SK-N-SH (cell line): ENCODE measurements at regions of chr22 and their contacts with region 1.

Region 1: GRCh38 chr22:42444077-42444904 is 12.1 kb upstream of the NFAM1 start:
- DNase-seq: peak; percentile 90
- H3K4me3 ChIP-seq: peak overlapping the region; percentile 34 to 52
- H3K27ac ChIP-seq: peak overlapping the region; percentile 33 to 76; a peak in 3 of 4 replicates
- H3K4me1 ChIP-seq: peaks cover 9 to 11% of the 10 kb centered on the region in 2 experiments; a peak in 2 of 4 replicates
- H3K27me3 ChIP-seq: no peaks in the 10 kb centered on the region
- CTCF ChIP-seq: peak; percentile 60
- EP300 ChIP-seq: no peak
- RAD21 ChIP-seq: peak; percentile 70

Region 2: GRCh38 chr22:42090596-42091454 is 353.5 kb before region 1 on chr22 and contains the start of gene NDUFA6:
- CTCF ChIA-PET with region 1: interaction called, 28 read pairs
- POLR2A ChIA-PET with region 1: interaction called, 8 read pairs
- DNase-seq: peak; percentile 91
- H3K4me3 ChIP-seq: peak within 1 kb of the TSS; percentile 70 to 74
- H3K27ac ChIP-seq: peak within 1 kb of the TSS; percentile 72 to 84
- H3K4me1 ChIP-seq: peaks cover 0 to 4% of the 10 kb centered on the region in 2 experiments; a peak in 1 of 4 replicates
- H3K27me3 ChIP-seq: no peaks in the 10 kb centered on the region
- CTCF ChIP-seq: peak; percentile 65
- EP300 ChIP-seq: no peak
- RAD21 ChIP-seq: peak; percentile 70
- polyA plus RNA-seq, gene NDUFA6: 37.8 and 42.0 TPM in 2 replicates

Region 3: GRCh38 chr22:42169055-42169469 is 275.2 kb before region 1 on chr22:
- CTCF ChIA-PET with region 1: interaction called, 43 read pairs
- POLR2A ChIA-PET with region 1: no interaction called
- DNase-seq: peak; percentile 84
- H3K4me3 ChIP-seq: peak overlapping the region in 1 of 2 experiments; percentile 56; a peak in 1 of 4 replicates
- H3K27ac ChIP-seq: no peak overlapping the region
- H3K4me1 ChIP-seq: peaks cover 0 to 23% of the 10 kb centered on the region in 2 experiments; a peak in 3 of 4 replicates
- H3K27me3 ChIP-seq: no peaks in the 10 kb centered on the region
- CTCF ChIP-seq: peak; percentile 71
- EP300 ChIP-seq: no peak
- RAD21 ChIP-seq: peak; percentile 92

Region 4: DNA sequence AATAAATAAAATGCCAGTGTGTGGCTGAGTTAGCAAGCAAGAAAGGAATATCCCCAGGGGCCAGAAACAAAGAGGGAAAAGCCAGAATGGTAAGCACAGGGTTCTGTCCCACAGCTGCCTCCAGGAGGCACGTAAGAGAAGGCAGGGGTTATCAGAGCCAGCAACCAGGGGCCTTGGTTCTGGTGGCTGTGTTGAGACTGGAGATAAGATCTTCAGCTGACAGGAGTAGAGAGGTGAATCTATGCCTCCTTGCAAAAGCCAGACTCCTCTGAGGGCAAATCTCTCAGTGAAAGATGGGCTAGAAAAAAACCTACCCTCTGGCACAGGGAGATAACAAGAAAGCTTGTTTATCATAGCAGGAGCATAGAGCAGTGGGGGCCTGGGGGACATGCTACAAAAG is 17.7 kb after region 1 on chr22:
- CTCF ChIA-PET with region 1: interaction called, 32 read pairs
- POLR2A ChIA-PET with region 1: interaction called, 6 read pairs
- DNase-seq: peak; percentile 58
- H3K4me3 ChIP-seq: no peak overlapping the region
- H3K27ac ChIP-seq: no peak overlapping the region
- H3K4me1 ChIP-seq: peaks cover 0 to 8% of the 10 kb centered on the region in 2 experiments; a peak in 1 of 4 replicates
- H3K27me3 ChIP-seq: no peaks in the 10 kb centered on the region
- CTCF ChIP-seq: no peak
- EP300 ChIP-seq: no peak
- RAD21 ChIP-seq: no peak

Region 5: DNA sequence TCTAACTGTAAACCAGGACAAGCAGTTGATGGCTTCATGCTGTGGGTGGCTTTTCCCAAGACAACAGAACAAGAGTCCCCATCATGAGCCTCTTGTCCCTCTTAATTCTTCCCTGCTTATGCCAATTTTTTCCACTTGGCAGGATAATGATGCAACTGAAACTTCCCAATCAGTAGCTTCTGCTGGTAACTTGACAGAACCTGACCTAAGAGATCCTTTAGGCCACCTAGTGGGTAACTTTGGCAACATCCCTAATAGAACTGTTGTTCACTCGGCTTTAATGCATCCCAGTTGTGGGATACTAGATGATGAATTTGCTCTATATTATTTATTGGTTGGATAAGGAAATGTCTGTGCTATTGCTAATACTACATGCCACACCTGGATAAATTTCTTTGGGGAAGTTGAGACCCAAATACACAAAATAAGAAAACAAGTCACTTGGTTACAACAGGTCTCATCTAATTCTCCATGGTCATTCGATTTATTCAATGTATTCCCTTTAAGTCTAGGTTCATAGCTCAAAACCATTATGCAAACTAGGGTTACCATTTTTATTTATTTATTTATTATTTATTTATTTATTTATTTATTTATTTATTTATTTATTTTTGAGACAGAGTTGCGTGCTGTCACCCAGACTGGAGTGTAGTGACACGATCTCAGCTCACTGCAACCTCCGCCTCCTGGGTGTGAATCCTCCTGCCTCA is 29.3 kb after region 1 on chr22:
- CTCF ChIA-PET with region 1: interaction called, 17 read pairs
- POLR2A ChIA-PET with region 1: no interaction called
- DNase-seq: peak; percentile 39
- H3K4me3 ChIP-seq: no peak overlapping the region
- H3K27ac ChIP-seq: no peak overlapping the region
- H3K4me1 ChIP-seq: no peaks in the 10 kb centered on the region
- H3K27me3 ChIP-seq: no peaks in the 10 kb centered on the region
- CTCF ChIP-seq: peak; percentile 55
- EP300 ChIP-seq: no peak
- RAD21 ChIP-seq: peak; percentile 61

Region 6: DNA sequence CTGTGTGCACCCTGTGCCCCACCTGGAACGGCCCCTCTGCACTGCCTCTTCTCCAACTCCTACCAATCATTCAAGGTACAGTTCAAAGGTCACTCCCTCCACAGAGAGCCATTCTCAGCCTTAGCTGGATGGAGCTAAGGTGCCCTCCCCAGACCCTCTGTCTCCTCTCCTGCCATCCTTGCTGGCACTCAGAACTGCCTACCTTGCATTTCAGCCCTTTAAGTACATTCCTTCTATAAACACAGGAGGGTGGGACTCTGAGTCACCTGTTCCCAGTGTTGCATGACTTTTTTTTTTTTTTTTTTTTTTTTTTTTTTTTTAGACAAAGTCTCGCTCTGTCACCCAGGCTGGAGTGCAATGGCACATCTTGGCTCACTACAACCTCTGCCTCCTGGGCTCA is 636.3 kb after region 1 on chr22:
- CTCF ChIA-PET with region 1: no interaction called
- POLR2A ChIA-PET with region 1: no interaction called
- DNase-seq: no peak
- H3K4me3 ChIP-seq: no peak overlapping the region
- H3K27ac ChIP-seq: no peak overlapping the region
- H3K4me1 ChIP-seq: no peaks in the 10 kb centered on the region
- H3K27me3 ChIP-seq: no peaks in the 10 kb centered on the region
- CTCF ChIP-seq: no peak
- EP300 ChIP-seq: no peak
- RAD21 ChIP-seq: no peak